ENCODE measurements at regions of chr11 and their contacts with region 1.

Region 1: GRCh38 chr11:20355221-20356219 is 8.0 kb upstream of the HTATIP2 start:
- DNase-seq: peak; percentile 65
- H3K4me3 Mint-ChIP-seq: no peak overlapping the region
- H3K27ac Mint-ChIP-seq: no peak overlapping the region
- H3K4me1 Mint-ChIP-seq: peaks cover 17% of the 10 kb centered on the region
- H3K27me3 Mint-ChIP-seq: no peaks in the 10 kb centered on the region
- CTCF ChIP-seq: peak; percentile 69

Region 2: DNA sequence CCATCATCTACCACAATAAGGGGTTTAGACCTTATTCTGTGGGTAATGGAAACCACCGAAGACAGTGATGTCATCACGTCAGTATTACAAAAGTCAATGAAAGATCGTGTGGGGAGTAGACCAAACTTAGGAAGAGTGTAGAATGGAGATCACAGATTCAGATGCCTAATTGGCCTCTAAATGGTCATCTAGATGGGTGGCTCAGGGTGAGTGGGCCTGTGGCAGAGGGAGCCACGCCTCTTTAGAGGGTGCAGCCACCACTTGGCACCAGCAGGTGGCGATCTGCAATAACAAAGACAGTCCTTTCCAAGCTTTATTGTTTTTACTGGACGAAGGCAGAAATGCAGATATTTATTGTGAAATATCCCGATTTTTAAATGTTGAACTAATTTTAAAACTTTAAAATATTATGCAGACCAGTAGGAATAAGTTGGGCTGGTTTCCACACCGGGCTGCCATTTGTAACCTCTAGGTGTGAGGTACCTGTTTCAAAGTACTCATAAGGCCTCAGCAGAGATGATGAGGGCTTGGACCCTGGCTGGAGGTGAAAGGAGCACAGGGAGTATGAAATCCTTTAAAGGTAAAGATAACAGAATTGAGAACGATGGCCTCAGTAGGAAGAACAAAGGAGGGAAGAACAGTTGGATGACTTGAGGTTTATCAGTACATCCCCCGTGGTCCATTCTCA is 417.2 kb before region 1 on chr11:
- CTCF ChIA-PET with region 1: interaction called, 17 read pairs
- POLR2A ChIA-PET with region 1: interaction called, 3 read pairs
- intact Hi-C with region 1: loop called (anchors 2 kb)
- DNase-seq: peak; percentile 72
- H3K4me3 Mint-ChIP-seq: no peak overlapping the region
- H3K27ac Mint-ChIP-seq: peak overlapping the region; percentile 47
- H3K4me1 Mint-ChIP-seq: peaks cover 24% of the 10 kb centered on the region
- H3K27me3 Mint-ChIP-seq: no peaks in the 10 kb centered on the region
- CTCF ChIP-seq: peak; percentile 80

Region 3: GRCh38 chr11:20243974-20244373 is 111.5 kb before region 1 on chr11:
- CTCF ChIA-PET with region 1: interaction called, 6 read pairs
- POLR2A ChIA-PET with region 1: interaction called, 3 read pairs
- intact Hi-C with region 1: loop called (anchors 2 kb)
- DNase-seq: peak; percentile 16
- H3K4me3 Mint-ChIP-seq: no peak overlapping the region
- H3K27ac Mint-ChIP-seq: no peak overlapping the region
- H3K4me1 Mint-ChIP-seq: no peaks in the 10 kb centered on the region
- H3K27me3 Mint-ChIP-seq: peaks cover 80% of the 10 kb centered on the region
- CTCF ChIP-seq: peak; percentile 30

Region 4: DNA sequence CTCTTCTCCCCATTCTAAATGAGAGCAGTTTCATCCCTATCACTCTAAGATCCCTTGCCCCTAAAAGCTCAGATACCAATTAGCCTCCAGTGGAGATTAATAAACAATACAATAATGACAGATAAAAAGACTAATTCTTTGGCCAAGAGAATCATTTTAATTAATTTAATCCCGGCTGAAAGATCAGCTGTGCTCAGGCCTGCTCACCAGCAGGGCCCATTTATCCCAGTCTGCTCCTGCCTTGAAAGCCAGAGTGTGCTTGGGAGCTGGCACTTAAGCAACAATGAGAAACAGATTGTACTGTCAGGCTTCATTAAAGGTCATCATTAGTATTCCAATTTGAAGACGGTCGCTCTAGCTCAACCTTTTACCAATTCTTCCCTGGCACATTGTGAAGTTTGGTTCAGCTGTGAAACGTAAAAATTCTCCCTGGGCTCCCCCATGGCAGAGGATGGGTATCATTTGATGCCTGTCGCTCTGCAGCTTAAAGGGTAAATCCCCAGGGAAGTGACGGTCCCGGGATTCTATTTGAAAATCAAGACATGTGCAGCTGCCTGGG is 28.1 kb before region 1 on chr11:
- CTCF ChIA-PET with region 1: interaction called, 14 read pairs
- POLR2A ChIA-PET with region 1: no interaction called
- intact Hi-C with region 1: no loop called
- DNase-seq: no peak
- H3K4me3 Mint-ChIP-seq: no peak overlapping the region
- H3K27ac Mint-ChIP-seq: no peak overlapping the region
- H3K4me1 Mint-ChIP-seq: no peaks in the 10 kb centered on the region
- H3K27me3 Mint-ChIP-seq: peaks cover 91% of the 10 kb centered on the region
- CTCF ChIP-seq: no peak

Region 5: GRCh38 chr11:20337526-20338154 is 17.9 kb before region 1 on chr11:
- CTCF ChIA-PET with region 1: interaction called, 24 read pairs
- POLR2A ChIA-PET with region 1: interaction called, 3 read pairs
- intact Hi-C with region 1: no loop called
- DNase-seq: peak; percentile 46
- H3K4me3 Mint-ChIP-seq: no peak overlapping the region
- H3K27ac Mint-ChIP-seq: no peak overlapping the region
- H3K4me1 Mint-ChIP-seq: no peaks in the 10 kb centered on the region
- H3K27me3 Mint-ChIP-seq: peaks cover 97% of the 10 kb centered on the region
- CTCF ChIP-seq: peak; percentile 42

Region 6: GRCh38 chr11:20474176-20474881 is 118.8 kb after region 1 on chr11:
- CTCF ChIA-PET with region 1: no interaction called
- POLR2A ChIA-PET with region 1: no interaction called
- intact Hi-C with region 1: no loop called
- DNase-seq: peak; percentile 41
- H3K4me3 Mint-ChIP-seq: peak overlapping the region; percentile 45
- H3K27ac Mint-ChIP-seq: peak overlapping the region; percentile 87
- H3K4me1 Mint-ChIP-seq: peaks cover 26% of the 10 kb centered on the region
- H3K27me3 Mint-ChIP-seq: no peaks in the 10 kb centered on the region
- CTCF ChIP-seq: no peak